Activated CD4-positive, alpha-beta T cell treated with anti-CD3 and anti-CD28 coated beads for 36 hours (primary cell): ENCODE measurements at regions of chr10 and their contacts with region 1.

Region 1: GRCh38 chr10:122374237-122374869 is at the start of gene PLEKHA1:
- DNase-seq: peak; percentile 96
- ATAC-seq: peak; percentile 93
- H3K4me3 Mint-ChIP-seq: peak within 1 kb of the TSS; percentile 87
- H3K27ac Mint-ChIP-seq: peak within 1 kb of the TSS; percentile 94
- H3K4me1 Mint-ChIP-seq: peaks cover 38% of the 10 kb centered on the region
- H3K27me3 Mint-ChIP-seq: peaks cover 2% of the 10 kb centered on the region
- total RNA-seq, gene PLEKHA1: 7.7 to 11.7 TPM

Region 2: GRCh38 chr10:121927841-121928527 is 446.4 kb before region 1 on chr10 and contains the start of gene ATE1:
- CTCF ChIA-PET with region 1: no interaction called
- POLR2A ChIA-PET with region 1: no interaction called
- intact Hi-C with region 1: loop called in 1 of 2 experiments (anchors 2 kb)
- DNase-seq: peak; percentile 89
- ATAC-seq: peak; percentile 94
- H3K4me3 Mint-ChIP-seq: peak within 1 kb of the TSS; percentile 88
- H3K27ac Mint-ChIP-seq: peak within 1 kb of the TSS; percentile 96
- H3K4me1 Mint-ChIP-seq: peaks cover 20% of the 10 kb centered on the region
- H3K27me3 Mint-ChIP-seq: no peaks in the 10 kb centered on the region
- total RNA-seq, gene ATE1: 23.2 to 23.9 TPM

Region 3: DNA sequence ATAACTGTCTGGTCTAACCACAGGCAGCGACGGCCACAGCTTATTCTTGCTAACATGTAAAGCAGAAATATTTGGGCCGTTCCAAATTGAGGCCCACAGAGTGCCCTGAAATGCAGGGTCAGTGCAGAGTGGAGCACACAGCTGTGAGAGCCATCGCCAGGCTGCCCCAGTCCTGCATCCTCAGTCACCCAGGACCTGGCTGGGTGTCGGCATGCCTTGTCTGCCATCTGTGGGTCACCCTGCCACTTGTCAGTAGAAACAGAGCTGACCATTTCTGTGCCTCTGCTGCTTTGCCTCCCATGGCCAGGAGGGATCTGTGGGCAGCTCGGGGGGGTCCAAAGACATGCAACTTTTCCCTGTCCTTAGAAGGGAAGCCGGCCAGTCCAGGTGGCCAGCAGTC is 160.6 kb before region 1 on chr10:
- CTCF ChIA-PET with region 1: no interaction called
- POLR2A ChIA-PET with region 1: no interaction called
- intact Hi-C with region 1: no loop called
- DNase-seq: no peak
- ATAC-seq: no peak
- H3K4me3 Mint-ChIP-seq: no peak overlapping the region
- H3K27ac Mint-ChIP-seq: no peak overlapping the region
- H3K4me1 Mint-ChIP-seq: no peaks in the 10 kb centered on the region
- H3K27me3 Mint-ChIP-seq: peaks cover 4% of the 10 kb centered on the region

Region 4: DNA sequence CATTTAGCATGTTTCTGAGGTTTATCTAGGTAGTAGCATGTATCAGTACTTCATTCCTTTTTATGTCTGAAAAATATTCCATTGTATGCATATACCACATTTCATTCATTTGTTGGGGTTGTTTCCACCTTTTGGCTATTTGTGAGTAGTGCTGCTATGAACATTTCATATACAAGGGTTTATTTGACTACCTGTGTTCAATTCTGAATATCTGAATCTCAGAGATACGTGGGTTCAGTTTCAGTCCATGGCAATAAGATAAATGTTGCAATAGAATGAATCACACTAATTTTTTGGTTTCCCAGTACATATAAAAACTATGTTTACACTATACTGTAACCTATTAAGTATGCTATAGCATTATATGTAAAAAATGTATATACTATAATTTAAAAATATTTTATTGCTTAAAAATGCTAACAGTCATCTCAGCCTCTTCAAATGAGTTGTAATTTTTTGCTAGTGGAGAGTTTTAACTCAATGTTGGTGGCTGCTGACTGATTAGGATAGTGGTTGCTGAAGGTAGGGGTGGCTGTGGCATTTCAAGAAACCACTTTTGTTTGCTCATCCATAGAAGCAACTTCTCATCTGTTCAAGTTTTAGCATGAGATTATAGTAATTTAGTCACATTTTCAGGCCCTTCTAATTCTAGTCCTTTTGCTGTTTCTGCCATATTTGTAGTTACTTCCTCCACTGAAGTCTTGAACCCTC is 14.1 kb after region 1 on chr10:
- CTCF ChIA-PET with region 1: interaction called, 12 read pairs
- POLR2A ChIA-PET with region 1: interaction called, 8 read pairs
- intact Hi-C with region 1: loop called (anchors 1 kb)
- DNase-seq: peak; percentile 73
- ATAC-seq: peak; percentile 87
- H3K4me3 Mint-ChIP-seq: no peak overlapping the region
- H3K27ac Mint-ChIP-seq: peak overlapping the region; percentile 86
- H3K4me1 Mint-ChIP-seq: peaks cover 48% of the 10 kb centered on the region
- H3K27me3 Mint-ChIP-seq: no peaks in the 10 kb centered on the region

Region 5: DNA sequence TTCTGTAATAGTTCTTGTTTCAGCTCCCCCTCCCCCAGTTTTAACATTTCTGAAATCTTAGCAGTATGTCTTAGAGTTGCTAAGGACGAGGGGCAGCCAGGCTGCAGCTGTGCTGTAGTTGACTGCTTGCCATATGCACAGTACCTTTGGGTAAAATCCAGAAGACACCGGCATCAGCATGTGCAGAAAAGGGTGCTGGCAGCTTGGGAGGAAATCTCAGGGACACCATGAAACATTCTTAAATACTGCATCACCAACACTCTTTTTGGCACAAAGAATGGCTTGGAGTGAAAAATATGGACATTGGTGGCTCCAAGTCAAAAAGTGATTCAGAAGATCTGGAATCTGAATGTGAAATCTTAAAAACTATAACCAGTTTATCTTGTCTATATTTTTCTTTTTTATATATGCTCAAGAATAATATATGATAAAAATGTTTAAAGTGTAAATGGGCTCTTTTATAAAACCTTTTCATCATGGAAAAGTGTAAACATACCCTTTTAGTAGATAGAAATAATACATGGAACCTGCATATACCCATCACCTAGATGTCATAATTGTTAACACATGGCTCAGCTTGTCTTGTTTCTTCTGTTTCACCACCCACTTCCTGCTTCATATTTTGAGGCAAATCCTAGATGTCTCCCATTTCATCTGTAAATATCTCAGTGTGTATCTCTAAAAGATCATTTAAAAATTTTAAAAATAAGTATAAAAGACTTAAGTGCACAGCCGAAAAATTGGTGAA is 45.7 kb after region 1 on chr10:
- CTCF ChIA-PET with region 1: interaction called, 3 read pairs
- POLR2A ChIA-PET with region 1: no interaction called
- intact Hi-C with region 1: loop called (anchors 2 to 5 kb)
- DNase-seq: no peak
- ATAC-seq: no peak
- H3K4me3 Mint-ChIP-seq: no peak overlapping the region
- H3K27ac Mint-ChIP-seq: no peak overlapping the region
- H3K4me1 Mint-ChIP-seq: peaks cover 70% of the 10 kb centered on the region
- H3K27me3 Mint-ChIP-seq: no peaks in the 10 kb centered on the region

Region 6: DNA sequence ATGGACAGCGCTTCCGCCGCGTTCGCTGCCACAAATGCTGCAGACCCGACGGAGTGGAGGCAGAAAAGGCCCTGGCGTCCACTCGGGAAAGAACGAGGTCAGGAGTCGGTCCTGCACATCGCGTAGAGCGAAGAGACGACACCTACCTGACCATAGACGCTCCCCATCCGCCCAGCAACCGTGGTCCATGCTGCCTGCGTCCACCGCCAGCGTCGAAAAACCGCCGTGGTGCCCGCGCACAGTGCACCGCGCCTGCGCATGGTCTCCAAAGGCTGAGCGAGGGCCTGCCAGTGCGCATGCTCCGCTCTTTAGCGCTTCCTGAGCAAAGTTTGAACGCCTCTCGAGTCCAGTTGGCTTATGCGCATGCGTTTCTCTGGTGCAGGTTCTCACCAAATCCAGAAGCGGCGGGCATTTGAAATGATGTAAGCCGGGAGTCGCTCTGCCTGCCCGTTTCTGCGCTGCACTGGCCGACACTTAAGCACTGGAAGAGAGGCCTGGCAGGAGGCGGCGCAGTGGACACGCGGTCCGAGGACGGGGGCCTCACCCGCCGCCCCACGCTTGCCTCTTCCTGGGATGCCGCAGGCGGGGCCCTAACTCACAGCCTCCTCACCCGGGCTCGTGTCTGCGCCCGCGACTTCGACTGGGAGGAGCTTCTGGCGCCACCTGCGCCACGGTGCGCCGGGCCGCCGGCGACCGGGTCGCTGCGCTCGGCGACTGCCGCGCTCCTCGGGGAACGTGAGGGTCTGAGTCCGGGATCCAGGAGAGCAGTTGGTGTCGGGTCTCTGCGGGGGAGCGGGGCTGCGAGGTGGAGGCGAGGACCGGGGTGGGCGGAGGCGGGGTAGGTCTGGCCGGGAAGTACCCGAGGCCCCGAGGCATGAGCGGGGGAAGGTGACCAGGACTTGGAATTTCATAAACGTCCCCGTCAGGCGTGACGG is 505.3 kb after region 1 on chr10 and contains the start of gene FAM24B:
- CTCF ChIA-PET with region 1: no interaction called
- POLR2A ChIA-PET with region 1: no interaction called
- intact Hi-C with region 1: loop called in 1 of 2 experiments (anchors 1 kb)
- DNase-seq: peak; percentile 96
- ATAC-seq: peak; percentile 90
- H3K4me3 Mint-ChIP-seq: peak within 1 kb of the TSS; percentile 92
- H3K27ac Mint-ChIP-seq: peak within 1 kb of the TSS; percentile 93
- H3K4me1 Mint-ChIP-seq: peaks cover 53% of the 10 kb centered on the region
- H3K27me3 Mint-ChIP-seq: no peaks in the 10 kb centered on the region
- total RNA-seq, gene FAM24B: 7.0 to 9.5 TPM

Region 7: GRCh38 chr10:123008439-123009205 is 634.3 kb after region 1 on chr10 and contains the starts of genes ACADSB and IKZF5:
- CTCF ChIA-PET with region 1: no interaction called
- POLR2A ChIA-PET with region 1: no interaction called
- intact Hi-C with region 1: loop called (anchors 1 to 5 kb)
- DNase-seq: peak; percentile 98
- ATAC-seq: peak; percentile 87
- H3K4me3 Mint-ChIP-seq: peak within 1 kb of the TSS; percentile 95
- H3K27ac Mint-ChIP-seq: peak within 1 kb of the TSS; percentile 99
- H3K4me1 Mint-ChIP-seq: peaks cover 42% of the 10 kb centered on the region
- H3K27me3 Mint-ChIP-seq: no peaks in the 10 kb centered on the region
- total RNA-seq, gene ACADSB: 24.0 to 25.5 TPM
- total RNA-seq, gene IKZF5: 9.4 to 14.1 TPM

Region 8: GRCh38 chr10:123165445-123166072 is 791.2 kb after region 1 on chr10:
- CTCF ChIA-PET with region 1: no interaction called
- POLR2A ChIA-PET with region 1: no interaction called
- intact Hi-C with region 1: no loop called
- DNase-seq: no peak
- ATAC-seq: no peak
- H3K4me3 Mint-ChIP-seq: no peak overlapping the region
- H3K27ac Mint-ChIP-seq: no peak overlapping the region
- H3K4me1 Mint-ChIP-seq: peaks cover 24% of the 10 kb centered on the region
- H3K27me3 Mint-ChIP-seq: no peaks in the 10 kb centered on the region